ENCODE measurements at regions of chr5 and their contacts with region 1.

Region 1: GRCh38 chr5:151447174-151448037 is at the start of gene SLC36A1:
- DNase-seq: peak; percentile 97 to 99
- ATAC-seq: peak; percentile 99
- H3K4me3 ChIP-seq: peak within 1 kb of the TSS; percentile 51 to 65
- H3K27ac ChIP-seq: no peak within 1 kb of the TSS
- H3K4me1 ChIP-seq: no peaks in the 10 kb centered on the region
- H3K27me3 ChIP-seq: no peaks in the 10 kb centered on the region
- total RNA-seq, gene SLC36A1: 13.6 to 19.0 TPM

Region 2: GRCh38 chr5:151213800-151214613 is 233.4 kb before region 1 on chr5:
- intact Hi-C with region 1: no loop called
- DNase-seq: peak; percentile 86 to 90
- ATAC-seq: peak; percentile 77
- H3K4me3 ChIP-seq: no peak overlapping the region
- H3K27ac ChIP-seq: no peak overlapping the region
- H3K4me1 ChIP-seq: no peaks in the 10 kb centered on the region
- H3K27me3 ChIP-seq: no peaks in the 10 kb centered on the region

Region 3: GRCh38 chr5:151499501-151500035 is 52.2 kb after region 1 on chr5:
- intact Hi-C with region 1: loop called (anchors 2 to 5 kb)
- DNase-seq: no peak
- ATAC-seq: no peak
- H3K4me3 ChIP-seq: no peak overlapping the region
- H3K27ac ChIP-seq: no peak overlapping the region
- H3K4me1 ChIP-seq: no peaks in the 10 kb centered on the region
- H3K27me3 ChIP-seq: no peaks in the 10 kb centered on the region

Region 4: DNA sequence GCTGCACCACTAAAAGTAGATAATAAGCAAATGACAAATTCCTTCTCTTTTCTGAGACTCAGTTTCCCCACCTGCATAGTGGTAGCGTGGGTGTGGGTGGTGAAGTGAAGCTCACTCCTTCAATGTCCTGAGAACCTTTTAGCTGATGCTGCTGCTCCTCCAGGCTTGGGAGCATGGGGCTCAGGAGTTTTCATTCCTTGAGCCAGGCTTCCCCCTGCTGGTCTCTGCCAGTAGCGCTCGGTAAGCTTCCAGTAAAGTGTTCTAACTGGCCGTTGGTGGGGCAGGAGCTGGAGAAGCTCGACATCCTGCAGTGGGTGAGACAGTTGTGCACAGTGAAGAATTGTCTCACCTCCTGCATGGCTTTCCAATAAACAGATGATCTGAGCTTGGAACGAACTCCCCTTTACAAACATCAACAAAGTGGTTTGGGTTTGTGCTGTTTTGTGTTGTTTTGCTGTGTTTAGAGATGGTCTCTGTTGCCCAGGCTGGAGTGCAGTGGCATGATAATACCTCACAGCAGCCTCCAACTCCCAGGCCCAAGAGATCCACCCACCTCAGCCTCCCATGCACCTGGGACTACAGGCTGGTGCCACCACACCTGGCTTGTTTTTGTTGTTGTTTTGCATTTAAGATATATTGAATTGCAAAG is 204.7 kb after region 1 on chr5:
- intact Hi-C with region 1: loop called (anchors 1 to 2 kb)
- DNase-seq: peak; percentile 82 to 91
- ATAC-seq: peak; percentile 91
- H3K4me3 ChIP-seq: no peak overlapping the region
- H3K27ac ChIP-seq: no peak overlapping the region
- H3K4me1 ChIP-seq: no peaks in the 10 kb centered on the region
- H3K27me3 ChIP-seq: no peaks in the 10 kb centered on the region

Measured in aorta (tissue), 5 donors.